Posterior vena cava (tissue), 2 donors: ENCODE measurements at regions of chr2 and their contacts with region 1.

Region 1: DNA sequence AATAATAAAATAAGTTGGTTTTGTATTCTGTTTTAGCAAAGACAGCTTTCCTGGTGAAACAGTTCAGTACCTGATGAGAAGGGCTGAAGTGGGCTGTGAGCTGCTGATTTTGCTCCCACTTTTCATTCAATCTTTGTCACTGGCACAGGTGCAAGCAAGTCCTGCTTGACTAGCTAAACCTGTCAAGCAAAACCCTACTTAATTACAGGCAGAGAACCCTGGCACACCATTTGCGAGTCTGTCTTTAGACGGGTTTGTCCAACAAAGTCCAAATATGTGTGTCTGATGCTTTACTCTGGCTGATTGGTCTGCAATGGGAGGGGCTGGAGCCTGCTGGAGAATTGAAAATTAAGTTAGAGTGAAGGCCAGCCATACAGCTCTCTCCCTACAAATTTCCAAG is 267.2 kb downstream of the EPHA4 start:
- DNase-seq: no peak

Region 2: DNA sequence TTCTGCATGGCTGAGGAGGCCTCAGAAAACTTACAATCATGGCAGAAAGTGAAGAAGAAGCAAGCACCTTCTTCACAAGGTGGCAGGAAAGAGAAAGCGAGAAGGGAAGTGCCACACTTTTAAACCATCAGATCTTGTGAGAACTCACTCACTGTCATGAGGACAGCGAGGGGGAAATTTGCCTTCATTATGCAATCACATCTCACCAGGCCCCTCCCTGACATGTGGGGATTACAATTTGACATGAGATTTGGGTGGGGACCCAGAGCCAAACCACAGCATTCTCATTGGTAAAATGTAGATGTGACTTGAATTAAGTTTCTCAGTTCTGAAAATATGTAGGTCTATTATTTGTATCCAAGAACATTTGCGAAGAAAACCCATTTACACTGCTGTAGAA is 587.6 kb before region 1 on chr2:
- intact Hi-C with region 1: no loop called
- DNase-seq: no peak

Region 3: DNA sequence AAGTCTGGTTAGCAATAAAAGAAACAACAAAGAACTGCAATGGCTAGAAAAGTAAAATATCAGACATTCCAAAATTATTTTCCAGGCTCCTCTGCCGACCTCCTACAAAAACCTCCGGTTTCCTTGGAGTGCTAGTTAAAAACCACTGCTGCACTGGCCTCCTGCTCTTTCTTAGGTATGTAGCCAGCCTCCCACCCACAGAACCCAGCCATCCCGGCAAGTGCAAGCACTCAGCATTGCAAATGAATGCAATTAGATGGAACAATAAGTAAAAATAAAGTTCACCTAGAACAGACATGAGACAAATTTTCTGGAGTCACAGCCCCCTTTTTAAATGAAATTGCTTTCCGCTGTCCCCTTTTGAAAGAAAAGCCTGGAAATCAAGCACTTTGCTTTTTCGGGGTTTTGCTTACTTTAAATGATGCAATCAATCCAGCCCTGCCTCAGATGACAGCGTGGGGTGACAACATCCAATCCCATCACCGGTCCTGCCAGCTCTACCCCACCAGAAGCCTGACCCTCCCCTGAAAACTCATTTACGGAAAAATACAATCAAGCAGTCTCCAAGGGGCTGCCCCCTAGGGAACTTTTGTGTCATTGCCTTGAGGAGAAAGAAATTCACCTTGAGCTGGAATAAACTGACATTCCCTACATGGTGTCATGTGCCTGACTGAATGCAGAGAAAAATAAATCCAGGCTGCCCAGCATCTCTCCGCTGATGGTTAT is 67.4 kb after region 1 on chr2:
- intact Hi-C with region 1: loop called in 1 of 2 experiments (anchors 2 kb)
- DNase-seq: no peak

Region 4: GRCh38 chr2:221402072-221402471 is 97.2 kb after region 1 on chr2:
- intact Hi-C with region 1: no loop called
- DNase-seq: no peak